GM10248 (cell line): ENCODE measurements at regions of chr17 and their contacts with region 1.

Region 1: GRCh38 chr17:37047631-37048104 is 98.9 kb downstream of the AATF start:
- DNase-seq: peak; percentile 76
- CTCF ChIP-seq: peak; percentile 79

Region 2: DNA sequence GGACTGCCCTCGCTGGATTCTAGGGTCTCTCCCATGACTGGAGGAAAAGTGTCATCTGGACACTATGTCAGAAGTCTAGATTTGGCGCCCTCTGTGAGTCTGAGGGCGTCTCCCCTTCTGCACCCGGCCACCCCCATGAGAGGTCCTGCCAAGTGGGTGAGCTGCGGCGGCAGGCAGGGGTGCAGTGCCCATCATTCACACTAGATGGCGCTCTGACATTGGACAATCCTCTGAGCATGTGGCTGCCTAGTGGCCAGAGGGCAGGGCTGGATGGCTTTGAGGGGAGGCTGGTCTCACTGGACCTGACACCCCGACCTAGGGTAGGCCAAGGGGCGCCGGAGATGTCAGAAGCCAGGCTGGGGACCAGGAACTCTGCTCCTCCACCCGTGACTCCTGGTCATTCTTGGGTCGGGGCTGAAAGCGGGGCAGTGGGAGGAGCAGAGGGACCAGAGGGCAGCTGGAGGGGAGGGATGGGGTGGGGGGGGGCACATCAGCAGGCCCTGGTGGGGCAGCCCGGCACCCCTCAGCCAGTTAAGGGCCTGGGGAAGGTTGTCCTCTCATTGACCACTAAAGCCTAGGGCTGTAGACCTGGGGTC is 418.3 kb before region 1 on chr17:
- CTCF ChIA-PET with region 1: interaction called, 61 read pairs
- POLR2A ChIA-PET with region 1: no interaction called
- DNase-seq: peak; percentile 87
- CTCF ChIP-seq: peak; percentile 99

Region 3: GRCh38 chr17:36829676-36830075 is 218.0 kb before region 1 on chr17:
- CTCF ChIA-PET with region 1: no interaction called
- POLR2A ChIA-PET with region 1: no interaction called
- DNase-seq: no peak
- CTCF ChIP-seq: no peak

Region 4: DNA sequence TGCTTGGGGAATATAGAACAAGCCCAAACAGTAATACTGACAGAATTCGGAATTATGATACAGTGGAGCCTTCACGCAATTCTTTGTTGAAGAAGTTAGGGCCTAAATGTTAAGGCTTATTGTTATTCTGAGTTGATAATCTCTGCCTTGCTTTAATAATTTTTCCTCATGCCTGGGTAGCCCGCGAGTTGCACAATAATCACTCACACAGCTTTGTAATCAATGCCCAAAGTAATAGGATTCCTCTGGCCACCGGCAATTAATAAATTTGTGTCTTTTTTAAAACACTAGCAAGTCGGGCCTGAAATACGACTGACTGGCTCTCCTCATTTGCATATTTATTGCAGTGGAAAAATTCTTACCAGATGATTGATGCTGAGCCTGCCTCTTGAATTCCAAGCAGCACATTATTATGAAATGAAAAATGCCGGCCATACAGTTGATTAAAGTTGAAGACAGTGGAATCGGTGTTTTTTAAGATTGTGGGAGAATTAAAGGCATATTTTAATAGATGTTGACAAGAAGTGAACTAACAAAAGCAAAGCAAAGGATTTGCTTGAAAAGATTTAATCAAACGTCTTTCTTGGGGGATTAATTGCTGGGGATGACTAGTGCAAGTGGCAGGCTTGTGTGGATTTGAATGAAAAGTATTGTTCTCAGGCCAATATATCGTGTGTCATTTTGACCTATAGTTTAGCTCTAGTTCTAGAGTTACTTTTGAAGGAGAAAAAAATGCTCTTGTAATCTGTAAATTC is 68.7 kb before region 1 on chr17:
- CTCF ChIA-PET with region 1: no interaction called
- POLR2A ChIA-PET with region 1: no interaction called
- DNase-seq: no peak
- CTCF ChIP-seq: no peak

Region 5: DNA sequence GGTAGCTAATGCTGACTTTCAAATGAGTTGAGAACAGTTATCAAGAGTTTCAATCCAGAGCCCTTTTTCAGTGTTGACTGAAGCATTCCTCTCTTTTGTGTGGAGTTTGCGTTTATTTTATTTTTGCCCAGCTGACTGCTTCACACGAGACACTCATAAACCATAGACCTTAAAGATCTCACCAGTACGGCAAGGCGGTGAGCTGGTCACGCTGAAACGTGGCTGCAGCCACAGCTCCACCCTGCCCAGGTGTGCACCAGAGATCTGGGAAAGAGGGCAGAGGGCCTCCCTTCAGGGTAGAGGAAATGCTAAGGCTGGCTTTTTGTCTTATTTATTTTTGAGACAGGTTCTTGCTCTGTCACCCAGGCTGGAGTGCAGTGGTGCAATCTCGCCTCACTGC is 13.3 kb after region 1 on chr17:
- CTCF ChIA-PET with region 1: interaction called, 54 read pairs
- POLR2A ChIA-PET with region 1: no interaction called
- DNase-seq: no peak
- CTCF ChIP-seq: no peak

Region 6: GRCh38 chr17:37067555-37068111 is 20.0 kb after region 1 on chr17:
- CTCF ChIA-PET with region 1: interaction called, 17 read pairs
- POLR2A ChIA-PET with region 1: no interaction called
- DNase-seq: no peak
- CTCF ChIP-seq: no peak

Region 7: DNA sequence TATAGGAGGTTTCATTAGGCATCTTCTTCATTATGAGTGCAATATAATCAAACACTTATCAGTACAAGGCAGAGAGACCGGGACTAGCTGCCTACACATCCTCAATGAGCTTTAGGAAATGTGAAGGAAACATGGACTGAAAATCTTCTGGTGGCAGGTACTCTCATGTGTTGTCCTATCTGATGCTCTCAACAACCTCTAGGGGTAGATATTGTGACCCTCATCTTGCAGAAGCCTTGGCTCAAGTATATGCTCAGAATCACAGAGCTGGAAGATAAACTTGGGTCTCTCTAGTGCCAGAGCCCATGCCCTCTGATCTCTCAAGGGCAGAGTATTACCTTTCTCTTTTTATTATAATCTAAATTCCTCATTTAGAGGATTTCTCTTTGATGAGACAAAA is 146.5 kb after region 1 on chr17:
- CTCF ChIA-PET with region 1: no interaction called
- POLR2A ChIA-PET with region 1: no interaction called
- DNase-seq: no peak
- CTCF ChIP-seq: no peak

Region 8: GRCh38 chr17:37239690-37240334 is 192.1 kb after region 1 on chr17:
- CTCF ChIA-PET with region 1: interaction called, 10 read pairs
- POLR2A ChIA-PET with region 1: no interaction called
- DNase-seq: peak; percentile 28
- CTCF ChIP-seq: peak; percentile 77